Activated CD4-positive, alpha-beta memory T cell treated with anti-CD3 and anti-CD28 coated beads, Interleukin-2, amount 10 ng/mL, durations not matched to agents 7 days and 5 days (primary cell): ENCODE measurements at regions of chr3 and their contacts with region 1.

Region 1: GRCh38 chr3:52220380-52221026 is 4.9 kb downstream of the TLR9 start:
- DNase-seq: peak; percentile 91
- H3K4me3 Mint-ChIP-seq: peak overlapping the region; percentile 50
- H3K27ac Mint-ChIP-seq: peak overlapping the region; percentile 79
- H3K4me1 Mint-ChIP-seq: peaks cover 91% of the 10 kb centered on the region
- H3K27me3 Mint-ChIP-seq: no peaks in the 10 kb centered on the region

Region 2: GRCh38 chr3:51887620-51888019 is 332.9 kb before region 1 on chr3:
- CTCF ChIA-PET with region 1: no interaction called
- POLR2A ChIA-PET with region 1: no interaction called
- DNase-seq: no peak
- H3K4me3 Mint-ChIP-seq: no peak overlapping the region
- H3K27ac Mint-ChIP-seq: no peak overlapping the region
- H3K4me1 Mint-ChIP-seq: peaks cover 24% of the 10 kb centered on the region
- H3K27me3 Mint-ChIP-seq: peaks cover 22% of the 10 kb centered on the region

Region 3: GRCh38 chr3:52204337-52205073 is 16.0 kb before region 1 on chr3:
- CTCF ChIA-PET with region 1: interaction called, 43 read pairs
- POLR2A ChIA-PET with region 1: interaction called, 6 read pairs
- DNase-seq: no peak
- H3K4me3 Mint-ChIP-seq: no peak overlapping the region
- H3K27ac Mint-ChIP-seq: peak overlapping the region; percentile 38
- H3K4me1 Mint-ChIP-seq: peaks cover 56% of the 10 kb centered on the region
- H3K27me3 Mint-ChIP-seq: no peaks in the 10 kb centered on the region

Region 4: GRCh38 chr3:52238761-52239701 is 18.5 kb after region 1 on chr3 and contains the start of gene TWF2:
- CTCF ChIA-PET with region 1: interaction called, 45 read pairs
- POLR2A ChIA-PET with region 1: interaction called, 121 read pairs
- DNase-seq: peak; percentile 87
- H3K4me3 Mint-ChIP-seq: peak within 1 kb of the TSS; percentile 95
- H3K27ac Mint-ChIP-seq: peak within 1 kb of the TSS; percentile 97
- H3K4me1 Mint-ChIP-seq: peaks cover 77% of the 10 kb centered on the region
- H3K27me3 Mint-ChIP-seq: no peaks in the 10 kb centered on the region
- total RNA-seq, gene TWF2: 118 to 119 TPM

Region 5: DNA sequence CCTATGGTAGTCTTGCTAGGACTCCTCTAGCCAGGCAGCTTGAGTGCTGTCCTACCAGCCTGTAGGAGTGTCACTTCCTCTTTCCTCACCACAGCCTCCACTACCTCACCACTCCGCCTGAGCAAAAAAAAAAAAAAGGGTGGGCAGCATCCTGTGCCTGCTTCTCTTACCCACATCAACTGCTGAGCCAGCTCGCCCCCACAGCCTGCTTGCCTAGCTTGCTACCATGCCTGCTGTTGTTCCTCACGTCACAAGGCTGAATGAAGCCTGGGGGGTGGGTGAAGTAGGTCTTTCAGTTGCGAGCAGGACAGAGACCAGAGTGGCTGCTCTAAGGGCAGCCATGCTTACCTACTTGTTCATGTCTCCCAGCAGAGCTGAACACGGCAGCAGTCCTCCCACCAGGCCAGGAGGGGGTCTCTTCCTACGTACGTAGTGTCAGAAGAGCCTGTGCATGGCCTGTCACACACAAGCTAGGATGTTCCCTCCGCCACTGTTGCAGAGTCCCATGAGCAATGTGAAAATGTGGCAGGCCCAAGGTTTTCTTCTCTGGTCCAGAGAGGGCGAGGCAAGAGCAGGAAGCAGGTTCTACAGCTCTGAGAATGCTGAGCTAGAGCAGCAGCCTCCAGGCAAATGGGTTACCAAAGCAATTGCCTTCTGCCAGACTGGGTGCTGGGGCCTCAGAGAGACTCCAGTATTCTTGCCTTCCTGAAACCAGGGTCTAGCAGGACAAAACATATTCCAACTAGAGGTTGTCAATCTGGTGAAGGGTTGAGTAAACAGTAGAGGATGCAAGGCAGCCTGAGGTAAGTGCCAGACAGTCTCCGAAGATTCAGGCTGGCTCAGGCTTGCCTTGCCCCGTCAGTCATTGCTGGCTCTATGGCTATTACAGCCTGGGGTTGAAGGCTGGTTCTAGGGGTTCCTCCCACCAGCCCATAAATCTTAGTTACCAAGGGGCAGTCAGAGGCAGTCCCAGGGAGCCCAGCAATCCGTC is 33.1 kb after region 1 on chr3:
- CTCF ChIA-PET with region 1: interaction called, 18 read pairs
- POLR2A ChIA-PET with region 1: interaction called, 4 read pairs
- DNase-seq: peak; percentile 87
- H3K4me3 Mint-ChIP-seq: peak overlapping the region; percentile 72
- H3K27ac Mint-ChIP-seq: peak overlapping the region; percentile 99
- H3K4me1 Mint-ChIP-seq: peaks cover 85% of the 10 kb centered on the region
- H3K27me3 Mint-ChIP-seq: no peaks in the 10 kb centered on the region

Region 6: DNA sequence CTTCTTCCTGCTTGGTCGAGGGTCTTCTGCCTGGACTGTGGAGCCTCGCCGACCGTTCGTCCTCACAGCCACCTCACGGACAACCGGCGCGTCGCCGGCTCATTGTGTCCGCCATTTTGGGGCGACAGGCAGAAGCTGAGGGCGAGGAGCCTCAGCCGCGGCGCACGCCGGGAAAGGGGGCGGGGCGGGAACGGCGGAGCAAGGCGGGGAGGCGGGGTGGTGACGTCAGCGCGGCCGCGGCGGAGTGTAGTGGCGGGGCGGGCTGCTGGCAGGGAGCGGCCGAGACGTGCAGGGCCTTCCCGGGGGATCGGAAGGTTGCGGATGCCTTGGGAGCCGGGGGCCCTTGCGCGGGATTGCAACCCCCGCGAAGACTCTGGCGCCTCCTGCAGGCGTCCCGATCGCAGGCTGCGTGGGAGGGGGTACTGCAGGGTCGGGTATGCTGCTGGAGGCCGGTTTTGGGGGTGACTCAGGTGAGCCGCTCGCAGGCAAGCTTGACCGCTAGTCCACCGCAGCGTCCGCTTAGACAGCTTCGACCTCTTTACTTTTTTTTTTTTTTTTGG is 58.1 kb after region 1 on chr3 and contains the start of gene WDR82:
- CTCF ChIA-PET with region 1: interaction called, 50 read pairs
- POLR2A ChIA-PET with region 1: interaction called, 24 read pairs
- DNase-seq: peak; percentile 98
- H3K4me3 Mint-ChIP-seq: peak within 1 kb of the TSS; percentile 96
- H3K27ac Mint-ChIP-seq: peak within 1 kb of the TSS; percentile 98
- H3K4me1 Mint-ChIP-seq: peaks cover 61% of the 10 kb centered on the region
- H3K27me3 Mint-ChIP-seq: no peaks in the 10 kb centered on the region
- total RNA-seq, gene WDR82: 131 TPM

Region 7: GRCh38 chr3:52385157-52385556 is 164.7 kb after region 1 on chr3:
- CTCF ChIA-PET with region 1: interaction called, 20 read pairs
- POLR2A ChIA-PET with region 1: interaction called, 3 read pairs
- DNase-seq: peak; percentile 35
- H3K4me3 Mint-ChIP-seq: no peak overlapping the region
- H3K27ac Mint-ChIP-seq: no peak overlapping the region
- H3K4me1 Mint-ChIP-seq: no peaks in the 10 kb centered on the region
- H3K27me3 Mint-ChIP-seq: no peaks in the 10 kb centered on the region

Region 8: DNA sequence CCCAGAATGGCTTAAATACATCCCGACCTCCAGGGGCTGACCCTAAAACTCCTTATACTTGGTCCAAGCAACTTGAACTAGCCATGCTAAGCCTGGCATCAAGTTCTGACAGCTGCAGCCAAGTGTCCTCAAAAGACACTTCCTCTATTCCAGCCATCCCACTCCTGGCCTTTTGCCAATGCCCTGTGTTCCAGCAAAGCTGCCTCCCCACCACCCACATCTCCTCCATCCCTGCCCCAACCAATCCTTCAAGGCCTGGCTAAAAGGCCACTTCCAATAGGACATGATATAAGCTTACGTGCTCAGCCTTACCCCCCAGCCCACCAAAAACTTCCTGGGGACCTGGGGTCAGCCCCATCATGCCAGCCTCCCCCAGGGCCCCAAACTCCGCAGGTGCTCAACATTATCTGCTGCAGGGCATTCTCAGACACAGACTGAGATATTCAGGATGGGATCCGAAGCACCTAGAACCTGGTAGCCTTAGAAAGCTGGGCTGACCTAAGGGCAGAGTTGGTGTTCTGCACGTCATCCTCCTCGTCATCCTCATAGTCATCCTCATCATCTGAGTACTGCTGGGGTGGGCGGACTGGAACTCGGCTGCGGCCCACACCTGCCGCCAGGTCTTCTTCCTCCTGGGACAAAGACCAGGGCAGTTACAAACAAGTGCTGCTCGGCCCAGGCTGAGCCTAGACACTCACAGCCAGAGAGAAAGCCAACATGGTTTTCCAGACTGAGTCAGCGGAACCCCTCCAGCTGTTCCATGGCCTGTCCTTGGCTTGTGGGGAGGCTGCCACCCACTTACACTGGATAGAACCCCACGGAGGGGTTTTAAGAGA is 183.7 kb after region 1 on chr3:
- CTCF ChIA-PET with region 1: no interaction called
- POLR2A ChIA-PET with region 1: no interaction called
- DNase-seq: no peak
- H3K4me3 Mint-ChIP-seq: no peak overlapping the region
- H3K27ac Mint-ChIP-seq: no peak overlapping the region
- H3K4me1 Mint-ChIP-seq: peaks cover 19% of the 10 kb centered on the region
- H3K27me3 Mint-ChIP-seq: no peaks in the 10 kb centered on the region